Activated T-helper 1 cell treated with anti-CD3 and anti-CD28 coated beads, Interleukin-12 subunit alpha, Interleukin-12 subunit beta, Interleukin-2, Interleukin-4 antibody, amounts not matched to agents 30 ng/mL and 10 ng/mL and 1 ng/mL, durations not matched to agents 14 hours and 24 hours and 36 hours (primary cell): ENCODE measurements at regions of chr15 and their contacts with region 1.

Region 1: DNA sequence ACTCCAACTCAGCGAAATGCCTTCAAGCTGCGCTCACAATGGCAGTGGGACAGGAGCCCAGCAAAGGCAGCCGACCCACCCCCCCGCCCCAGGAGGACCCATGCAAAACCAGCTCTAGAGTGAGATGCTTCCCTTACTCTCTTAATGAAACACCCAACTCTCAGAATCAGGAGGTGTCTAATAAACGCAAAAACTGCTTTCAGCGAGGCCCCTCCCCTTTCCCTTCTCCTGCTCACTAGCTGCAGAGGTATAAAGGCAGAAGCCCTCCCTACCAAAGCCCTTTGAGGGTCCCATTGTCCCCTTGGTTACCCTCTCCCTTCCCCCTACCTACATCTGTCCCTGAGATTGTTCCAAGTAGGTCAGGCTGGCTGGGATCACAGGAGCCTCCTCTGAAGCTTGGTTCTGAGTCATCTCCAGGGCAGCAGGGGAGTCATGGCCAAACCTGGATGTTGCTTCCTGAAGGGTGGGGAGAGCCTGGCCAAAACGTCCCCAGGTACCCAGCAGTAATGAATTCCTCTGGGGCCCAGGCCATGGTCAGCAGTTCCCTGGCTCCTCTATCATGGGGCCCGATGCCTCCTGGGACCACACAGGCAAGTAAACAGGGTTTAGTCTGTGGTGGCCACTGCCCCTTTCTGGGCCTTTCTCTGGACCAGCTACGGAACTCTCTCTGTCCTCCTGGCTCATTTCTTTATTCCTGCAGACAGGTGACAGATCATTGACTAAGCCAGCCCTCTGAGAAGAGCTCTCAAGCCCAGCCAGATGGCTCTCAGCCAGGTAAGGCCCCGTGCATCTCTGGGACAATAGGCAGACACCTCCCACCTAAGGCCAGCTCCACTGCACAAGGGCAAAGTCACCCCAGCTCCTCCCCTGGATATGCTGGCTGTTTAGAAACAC is 8.6 kb downstream of the KLHL25 start:
- DNase-seq: no peak
- H3K4me3 Mint-ChIP-seq: peak overlapping the region; percentile 68
- H3K27ac Mint-ChIP-seq: peak overlapping the region; percentile 86
- H3K4me1 Mint-ChIP-seq: peaks cover 52% of the 10 kb centered on the region
- H3K27me3 Mint-ChIP-seq: no peaks in the 10 kb centered on the region

Region 2: DNA sequence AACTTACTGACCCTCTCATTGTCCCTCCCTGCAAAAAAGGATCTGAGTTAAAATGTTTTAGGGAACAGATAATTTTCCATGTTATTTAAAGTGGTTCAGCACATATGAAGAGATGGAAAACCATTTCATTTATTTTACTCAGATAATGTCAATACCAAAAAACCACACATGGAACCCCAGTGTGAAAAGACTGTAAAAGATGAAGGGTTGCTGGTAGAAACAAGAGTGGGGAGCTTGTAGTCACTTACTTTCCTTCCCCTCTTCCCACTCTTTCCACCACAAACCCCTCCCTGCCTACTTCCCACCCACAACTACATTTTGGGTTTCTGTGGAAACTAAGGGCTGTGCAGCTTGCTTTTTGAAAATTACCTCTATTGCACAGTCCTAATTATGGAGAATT is 27.1 kb after region 1 on chr15:
- intact Hi-C with region 1: loop called (anchors 1 kb)
- DNase-seq: no peak
- H3K4me3 Mint-ChIP-seq: no peak overlapping the region
- H3K27ac Mint-ChIP-seq: peak overlapping the region; percentile 64
- H3K4me1 Mint-ChIP-seq: peaks cover 11% of the 10 kb centered on the region
- H3K27me3 Mint-ChIP-seq: peaks cover 9% of the 10 kb centered on the region

Region 3: DNA sequence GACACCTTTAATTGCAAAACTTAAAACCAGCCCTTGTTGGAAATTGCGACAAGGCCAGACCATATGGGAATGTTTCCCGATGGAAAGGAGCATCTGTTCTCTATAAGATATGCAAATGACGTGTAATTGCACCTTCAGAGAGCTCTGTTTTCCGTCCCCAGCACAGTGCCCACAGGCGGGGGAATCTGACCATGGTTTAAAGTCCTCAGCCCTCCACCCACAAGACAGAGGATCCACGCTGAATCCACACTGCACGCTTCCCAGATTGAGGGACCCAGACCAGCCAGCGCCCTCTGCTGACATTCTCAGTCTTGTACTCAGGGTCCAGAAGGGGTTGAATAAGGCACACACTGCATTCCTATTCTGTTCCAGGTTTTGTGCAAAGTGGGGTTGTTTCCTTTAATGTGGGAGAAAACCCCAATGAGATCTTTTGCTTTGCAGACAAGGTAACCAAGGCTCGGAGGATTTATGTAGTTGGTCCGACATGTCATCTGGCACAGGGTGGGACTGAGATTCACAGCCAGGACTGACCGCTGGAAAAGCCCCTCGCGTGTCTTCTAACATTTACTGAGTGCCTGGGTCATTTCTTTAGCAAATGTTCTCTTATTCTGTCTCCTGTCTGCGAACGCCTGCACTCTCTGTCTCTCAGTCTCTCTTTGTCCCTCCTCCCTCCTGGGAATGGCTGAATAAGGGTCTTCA is 45.4 kb after region 1 on chr15:
- intact Hi-C with region 1: loop called (anchors 5 kb)
- DNase-seq: no peak
- H3K4me3 Mint-ChIP-seq: no peak overlapping the region
- H3K27ac Mint-ChIP-seq: no peak overlapping the region
- H3K4me1 Mint-ChIP-seq: no peaks in the 10 kb centered on the region
- H3K27me3 Mint-ChIP-seq: peaks cover 4% of the 10 kb centered on the region